ENCODE measurements at regions of chr6 and their contacts with region 1.

Region 1: GRCh38 chr6:159693128-159693893 is at the start of gene SOD2:
- DNase-seq: no peak
- H3K4me3 ChIP-seq: peak within 1 kb of the TSS; percentile 83
- H3K27me3 ChIP-seq: no peaks in the 10 kb centered on the region
- CTCF ChIP-seq: no peak
- polyA plus RNA-seq, gene SOD2: 39.4 and 42.1 TPM in 2 replicates

Region 2: GRCh38 chr6:159633196-159633595 is 60.1 kb before region 1 on chr6:
- CTCF ChIA-PET with region 1: no interaction called
- POLR2A ChIA-PET with region 1: no interaction called
- DNase-seq: no peak
- H3K4me3 ChIP-seq: no peak overlapping the region
- H3K27me3 ChIP-seq: no peaks in the 10 kb centered on the region
- CTCF ChIP-seq: peak; percentile 38

Region 3: GRCh38 chr6:159682295-159682694 is 11.0 kb before region 1 on chr6:
- CTCF ChIA-PET with region 1: interaction called, 13 read pairs
- POLR2A ChIA-PET with region 1: interaction called, 4 read pairs
- DNase-seq: no peak
- H3K4me3 ChIP-seq: no peak overlapping the region
- H3K27me3 ChIP-seq: no peaks in the 10 kb centered on the region
- CTCF ChIP-seq: no peak

Region 4: GRCh38 chr6:159789377-159790148 is 96.3 kb after region 1 on chr6 and contains the start of gene TCP1:
- CTCF ChIA-PET with region 1: interaction called, 33 read pairs
- POLR2A ChIA-PET with region 1: interaction called, 8 read pairs
- DNase-seq: peak; percentile 99
- H3K4me3 ChIP-seq: peak within 1 kb of the TSS; percentile 87
- H3K27me3 ChIP-seq: no peaks in the 10 kb centered on the region
- CTCF ChIP-seq: no peak
- polyA plus RNA-seq, gene TCP1: 107 and 144 TPM in 2 replicates

Region 5: GRCh38 chr6:159852877-159853276 is 159.6 kb after region 1 on chr6:
- CTCF ChIA-PET with region 1: interaction called, 33 read pairs
- POLR2A ChIA-PET with region 1: no interaction called
- DNase-seq: no peak
- H3K4me3 ChIP-seq: no peak overlapping the region
- H3K27me3 ChIP-seq: peaks cover 2% of the 10 kb centered on the region; the same call in 1 of the 2 replicates
- CTCF ChIP-seq: peak; percentile 27; the same call in 1 of the 2 replicates

Region 6: DNA sequence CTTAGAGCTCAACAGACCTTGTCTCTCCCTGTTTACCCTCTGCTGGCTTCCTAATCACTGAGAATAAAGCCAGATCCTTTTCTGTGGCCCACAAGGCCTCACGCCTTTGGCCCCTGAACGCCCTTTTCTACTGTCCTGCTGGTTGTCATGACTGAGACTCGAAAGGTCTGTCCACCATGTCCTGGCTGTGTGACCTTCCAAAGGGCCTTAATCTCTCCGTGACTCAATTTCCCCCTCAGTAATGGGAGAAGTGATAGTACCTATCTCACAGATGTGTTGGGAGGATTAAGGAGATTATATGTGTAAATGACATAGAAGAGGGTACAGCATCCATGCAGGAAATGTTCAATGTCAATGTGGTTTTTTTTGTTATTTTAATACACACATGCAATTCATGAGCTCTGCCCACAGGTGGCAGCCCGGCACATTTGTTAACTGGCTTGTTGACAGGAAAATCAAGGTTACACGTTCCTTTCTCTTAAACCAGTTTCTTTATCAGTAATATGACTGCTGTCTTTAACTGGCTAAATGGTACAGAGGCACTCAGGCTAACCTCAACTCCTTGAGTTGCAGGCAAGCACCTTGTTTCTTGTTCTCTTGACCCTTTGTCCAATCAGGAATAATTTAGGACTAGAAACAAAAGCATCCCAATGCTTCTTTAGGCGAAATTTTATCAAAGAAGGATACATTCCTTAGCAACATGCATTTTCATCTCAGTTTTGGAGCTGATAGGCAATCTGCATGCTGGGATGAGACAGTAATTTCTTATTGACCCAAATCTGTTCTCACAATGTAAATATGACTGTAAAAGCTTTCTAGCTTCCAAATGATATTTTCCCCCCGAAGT is 444.9 kb after region 1 on chr6:
- CTCF ChIA-PET with region 1: no interaction called
- POLR2A ChIA-PET with region 1: no interaction called
- DNase-seq: peak; percentile 13
- H3K4me3 ChIP-seq: no peak overlapping the region
- H3K27me3 ChIP-seq: no peaks in the 10 kb centered on the region
- CTCF ChIP-seq: peak; percentile 79